Caco-2 (cell line): ENCODE measurements at regions of chr11 and their contacts with region 1.

Region 1: GRCh38 chr11:129973068-129973467 is 29.6 kb downstream of the PRDM10 start:
- DNase-seq: no peak
- H3K4me3 ChIP-seq: no peak overlapping the region
- H3K4me3 Mint-ChIP-seq: no peak overlapping the region
- H3K27ac Mint-ChIP-seq: no peak overlapping the region
- H3K4me1 ChIP-seq: peaks cover 23% of the 10 kb centered on the region
- H3K4me1 Mint-ChIP-seq: peaks cover 34% of the 10 kb centered on the region
- H3K27me3 ChIP-seq: no peaks in the 10 kb centered on the region
- H3K27me3 Mint-ChIP-seq: no peaks in the 10 kb centered on the region
- CTCF ChIP-seq: no peak

Region 2: GRCh38 chr11:129992161-129992944 is 19.3 kb after region 1 on chr11:
- CTCF ChIA-PET with region 1: interaction called, 10 read pairs
- POLR2A ChIA-PET with region 1: interaction called, 4 read pairs
- intact Hi-C with region 1: loop called (anchors 2 kb)
- DNase-seq: peak; percentile 80 to 82
- H3K4me3 ChIP-seq: no peak overlapping the region
- H3K4me3 Mint-ChIP-seq: no peak overlapping the region
- H3K27ac Mint-ChIP-seq: peak overlapping the region; percentile 35
- H3K4me1 ChIP-seq: peaks cover 13% of the 10 kb centered on the region
- H3K4me1 Mint-ChIP-seq: peaks cover 28% of the 10 kb centered on the region
- H3K27me3 ChIP-seq: no peaks in the 10 kb centered on the region
- H3K27me3 Mint-ChIP-seq: no peaks in the 10 kb centered on the region
- CTCF ChIP-seq: peak in 1 of 2 experiments; percentile 84